H1 (cell line): ENCODE measurements at regions of chr11 and their contacts with region 1.

Region 1: GRCh38 chr11:126886636-126887035 is 113.9 kb downstream of the KIRREL3 start:
- DNase-seq: no peak
- H3K4me3 ChIP-seq: no peak overlapping the region
- H3K27ac ChIP-seq: no peak overlapping the region
- H3K4me1 ChIP-seq: peaks cover 3 to 8% (median 4%) of the 10 kb centered on the region in 4 experiments; a peak in 6 of 7 replicates
- H3K27me3 ChIP-seq: no peaks in the 10 kb centered on the region
- CTCF ChIP-seq: no peak
- EP300 ChIP-seq: no peak
- POLR2A ChIP-seq: no peak
- RAD21 ChIP-seq: no peak

Region 2: GRCh38 chr11:126853732-126854131 is 32.9 kb before region 1 on chr11:
- CTCF ChIA-PET with region 1: no interaction called
- POLR2A ChIA-PET with region 1: no interaction called
- DNase-seq: no peak
- H3K4me3 ChIP-seq: no peak overlapping the region
- H3K27ac ChIP-seq: no peak overlapping the region
- H3K4me1 ChIP-seq: no peaks in the 10 kb centered on the region
- H3K27me3 ChIP-seq: no peaks in the 10 kb centered on the region
- CTCF ChIP-seq: no peak
- EP300 ChIP-seq: no peak
- POLR2A ChIP-seq: no peak
- RAD21 ChIP-seq: no peak

Region 3: DNA sequence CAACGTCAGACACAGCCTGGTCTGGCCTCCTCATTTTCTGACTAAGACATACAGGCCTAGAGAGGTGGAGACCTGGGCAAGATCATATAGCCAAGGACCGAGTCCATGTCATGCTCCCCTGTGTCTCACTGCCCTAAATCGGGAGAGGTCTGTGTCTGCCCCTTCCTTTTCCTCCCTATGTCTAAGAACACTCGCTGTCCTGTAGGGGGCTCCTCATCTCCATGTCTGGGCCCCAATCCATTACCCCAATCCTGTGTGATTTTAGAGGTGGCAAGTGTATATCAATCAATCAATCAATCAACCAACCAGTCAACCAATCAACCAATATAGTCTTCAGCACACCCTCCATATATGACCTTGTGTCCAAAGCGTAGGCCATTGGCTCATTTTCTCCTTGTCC is 11.8 kb before region 1 on chr11:
- CTCF ChIA-PET with region 1: interaction called, 20 read pairs
- POLR2A ChIA-PET with region 1: no interaction called
- DNase-seq: no peak
- H3K4me3 ChIP-seq: no peak overlapping the region
- H3K27ac ChIP-seq: no peak overlapping the region
- H3K4me1 ChIP-seq: no peaks in the 10 kb centered on the region
- H3K27me3 ChIP-seq: no peaks in the 10 kb centered on the region
- CTCF ChIP-seq: peak; percentile 50 to 76 (median 64)
- EP300 ChIP-seq: no peak
- POLR2A ChIP-seq: no peak
- RAD21 ChIP-seq: peak; percentile 79 to 82